PC-9 (cell line): ENCODE measurements at regions of chr6 and their contacts with region 1.

Region 1: DNA sequence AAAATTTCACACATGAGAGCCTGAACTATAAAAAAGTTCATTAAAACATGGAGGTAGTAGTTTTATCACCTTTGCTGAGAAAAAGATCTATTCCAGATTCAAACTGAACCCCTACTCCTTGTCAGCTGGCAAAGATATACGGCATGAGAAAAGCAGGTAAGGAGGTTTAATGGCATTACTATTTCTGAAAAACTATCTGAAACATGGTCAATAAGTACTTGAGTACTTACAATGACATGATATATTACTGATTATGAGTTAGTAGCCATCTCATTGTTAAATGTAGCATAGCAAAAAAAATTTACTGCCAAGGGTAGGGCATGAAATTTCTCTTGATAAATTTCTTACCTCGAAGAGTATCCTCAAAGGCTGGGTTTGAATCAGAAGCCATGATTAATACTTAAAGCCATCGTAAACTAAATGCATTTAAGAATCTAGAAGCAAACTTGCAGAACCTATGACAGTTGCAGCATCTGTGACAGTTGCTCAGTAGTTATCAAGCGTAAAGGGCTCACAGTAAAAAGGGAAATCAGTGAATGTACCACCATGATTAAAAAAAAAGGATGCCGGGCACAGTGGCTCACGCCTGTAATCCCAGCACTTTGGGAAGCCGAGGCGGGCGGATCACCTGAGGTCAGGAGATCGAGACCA is 8.7 kb downstream of the SLC17A5 start:
- DNase-seq: no peak
- H3K4me3 ChIP-seq: no peak overlapping the region
- H3K27ac ChIP-seq: 0 out of 2 replicates have a peak overlapping the region, but pooled peaks have one; percentile 48
- H3K4me1 ChIP-seq: peaks cover 22% of the 10 kb centered on the region
- H3K27me3 ChIP-seq: no peaks in the 10 kb centered on the region
- CTCF ChIP-seq: no peak

Region 2: GRCh38 chr6:72422171-72422570 is 1222.9 kb before region 1 on chr6:
- CTCF ChIA-PET with region 1: no interaction called
- POLR2A ChIA-PET with region 1: interaction called, 12 read pairs
- intact Hi-C with region 1: no loop called
- DNase-seq: no peak
- H3K4me3 ChIP-seq: no peak overlapping the region
- H3K27ac ChIP-seq: no peak overlapping the region
- H3K4me1 ChIP-seq: no peaks in the 10 kb centered on the region
- H3K27me3 ChIP-seq: no peaks in the 10 kb centered on the region
- CTCF ChIP-seq: no peak

Region 3: GRCh38 chr6:73329201-73329600 is 315.9 kb before region 1 on chr6:
- CTCF ChIA-PET with region 1: no interaction called
- POLR2A ChIA-PET with region 1: interaction called, 16 read pairs
- intact Hi-C with region 1: no loop called
- DNase-seq: no peak
- H3K4me3 ChIP-seq: no peak overlapping the region
- H3K27ac ChIP-seq: no peak overlapping the region
- H3K4me1 ChIP-seq: no peaks in the 10 kb centered on the region
- H3K27me3 ChIP-seq: no peaks in the 10 kb centered on the region
- CTCF ChIP-seq: no peak

Region 4: GRCh38 chr6:74956559-74957428 is 1311.7 kb after region 1 on chr6:
- CTCF ChIA-PET with region 1: no interaction called
- POLR2A ChIA-PET with region 1: no interaction called
- intact Hi-C with region 1: no loop called
- DNase-seq: no peak
- H3K4me3 ChIP-seq: no peak overlapping the region
- H3K27ac ChIP-seq: no peak overlapping the region
- H3K4me1 ChIP-seq: no peaks in the 10 kb centered on the region
- H3K27me3 ChIP-seq: no peaks in the 10 kb centered on the region
- CTCF ChIP-seq: no peak